ENCODE measurements at regions of chr12 and their contacts with region 1.

Region 1: GRCh38 chr12:92570056-92570753 is 132.6 kb upstream of the PLEKHG7 start:
- DNase-seq: peak; percentile 25
- H3K4me3 Mint-ChIP-seq: no peak overlapping the region
- H3K27ac Mint-ChIP-seq: no peak overlapping the region
- H3K4me1 Mint-ChIP-seq: peaks cover 24% of the 10 kb centered on the region
- H3K27me3 Mint-ChIP-seq: no peaks in the 10 kb centered on the region

Region 2: GRCh38 chr12:91361864-91362263 is 1208.3 kb before region 1 on chr12:
- CTCF ChIA-PET with region 1: interaction called, 3 read pairs
- POLR2A ChIA-PET with region 1: no interaction called
- intact Hi-C with region 1: loop called (anchors 5 kb)
- DNase-seq: no peak
- H3K4me3 Mint-ChIP-seq: no peak overlapping the region
- H3K27ac Mint-ChIP-seq: no peak overlapping the region
- H3K4me1 Mint-ChIP-seq: no peaks in the 10 kb centered on the region
- H3K27me3 Mint-ChIP-seq: peaks cover 3% of the 10 kb centered on the region

Region 3: GRCh38 chr12:91811481-91812287 is 758.5 kb before region 1 on chr12:
- CTCF ChIA-PET with region 1: interaction called, 8 read pairs
- POLR2A ChIA-PET with region 1: no interaction called
- intact Hi-C with region 1: loop called (anchors 5 kb)
- DNase-seq: peak; percentile 80
- H3K4me3 Mint-ChIP-seq: no peak overlapping the region
- H3K27ac Mint-ChIP-seq: no peak overlapping the region
- H3K4me1 Mint-ChIP-seq: peaks cover 20% of the 10 kb centered on the region
- H3K27me3 Mint-ChIP-seq: no peaks in the 10 kb centered on the region

Region 4: GRCh38 chr12:92136965-92137721 is 433.1 kb before region 1 on chr12:
- CTCF ChIA-PET with region 1: interaction called, 3 read pairs
- POLR2A ChIA-PET with region 1: no interaction called
- intact Hi-C with region 1: loop called (anchors 2 kb)
- DNase-seq: no peak
- H3K4me3 Mint-ChIP-seq: peak overlapping the region; percentile 100
- H3K27ac Mint-ChIP-seq: peak overlapping the region; percentile 91
- H3K4me1 Mint-ChIP-seq: peaks cover 65% of the 10 kb centered on the region
- H3K27me3 Mint-ChIP-seq: no peaks in the 10 kb centered on the region

Region 5: GRCh38 chr12:92297932-92298696 is 272.1 kb before region 1 on chr12:
- CTCF ChIA-PET with region 1: no interaction called
- POLR2A ChIA-PET with region 1: no interaction called
- intact Hi-C with region 1: loop called (anchors 2 kb)
- DNase-seq: peak; percentile 26
- H3K4me3 Mint-ChIP-seq: peak overlapping the region; percentile 30
- H3K27ac Mint-ChIP-seq: peak overlapping the region; percentile 79
- H3K4me1 Mint-ChIP-seq: peaks cover 13% of the 10 kb centered on the region
- H3K27me3 Mint-ChIP-seq: no peaks in the 10 kb centered on the region

Region 6: DNA sequence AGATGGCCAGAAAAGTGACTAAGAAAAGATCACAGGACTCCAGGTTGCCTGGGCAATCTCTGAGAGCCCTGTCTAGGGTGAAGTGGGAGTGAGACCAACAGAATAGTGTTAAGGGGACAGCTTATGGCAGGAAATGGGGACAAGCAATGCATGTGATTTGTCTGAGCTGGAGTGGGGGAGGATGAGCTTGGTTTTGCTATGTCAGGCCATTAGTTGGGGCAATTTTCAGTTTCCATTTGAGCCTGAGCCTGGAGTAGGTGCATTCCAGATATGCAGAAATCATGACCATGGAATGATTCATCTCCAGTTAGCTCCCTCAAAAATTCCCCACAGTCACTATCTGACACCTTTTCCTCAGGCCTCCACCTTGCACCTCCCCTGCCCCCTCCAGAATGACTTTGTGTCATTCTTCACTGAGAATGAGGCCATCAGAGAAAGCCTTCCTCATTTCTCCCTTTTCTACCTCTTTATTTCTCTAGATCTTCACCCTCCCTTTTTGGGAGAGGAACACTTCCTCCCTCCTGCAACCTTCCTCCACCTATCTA is 18.3 kb before region 1 on chr12:
- CTCF ChIA-PET with region 1: interaction called, 19 read pairs
- POLR2A ChIA-PET with region 1: interaction called, 4 read pairs
- intact Hi-C with region 1: loop called (anchors 1 kb)
- DNase-seq: peak; percentile 75
- H3K4me3 Mint-ChIP-seq: no peak overlapping the region
- H3K27ac Mint-ChIP-seq: no peak overlapping the region
- H3K4me1 Mint-ChIP-seq: peaks cover 25% of the 10 kb centered on the region
- H3K27me3 Mint-ChIP-seq: no peaks in the 10 kb centered on the region

Region 7: GRCh38 chr12:92649511-92650227 is 79.5 kb after region 1 on chr12:
- CTCF ChIA-PET with region 1: interaction called, 17 read pairs
- POLR2A ChIA-PET with region 1: no interaction called
- intact Hi-C with region 1: loop called (anchors 1 kb)
- DNase-seq: peak; percentile 65
- H3K4me3 Mint-ChIP-seq: no peak overlapping the region
- H3K27ac Mint-ChIP-seq: no peak overlapping the region
- H3K4me1 Mint-ChIP-seq: peaks cover 12% of the 10 kb centered on the region
- H3K27me3 Mint-ChIP-seq: no peaks in the 10 kb centered on the region